Ovary (tissue), 10 donors: ENCODE measurements at regions of chr7 and their contacts with region 1.

Region 1: DNA sequence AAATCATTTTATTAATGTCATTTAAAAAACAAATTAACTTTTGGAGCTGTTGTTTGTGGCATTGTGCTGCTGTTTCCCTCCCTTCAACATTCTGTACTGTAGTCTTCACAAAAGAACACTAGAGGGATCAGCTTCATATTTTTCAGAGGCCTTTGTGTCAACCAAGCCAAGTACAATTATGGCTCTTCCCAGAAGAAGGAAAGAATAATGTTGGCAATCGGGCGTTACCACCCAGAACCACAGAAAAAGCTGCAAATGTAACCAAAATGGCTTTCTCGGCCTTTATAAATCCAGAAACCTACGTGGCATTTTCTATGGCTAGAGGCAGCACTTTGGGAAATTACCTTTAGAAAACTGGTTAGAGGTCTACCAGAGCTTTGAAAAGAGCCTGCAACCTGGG is 98.8 kb upstream of the COL1A2 start:
- DNase-seq: peak in 3 of 5 donors; percentile 20 to 44 (median 28)
- H3K4me3 ChIP-seq: no peak overlapping the region
- H3K27ac ChIP-seq: peak overlapping the region in 1 of 2 donors; percentile 84
- H3K4me1 ChIP-seq: peaks cover 16% of the 10 kb centered on the region
- H3K27me3 ChIP-seq: no peaks in the 10 kb centered on the region
- CTCF ChIP-seq: peak; percentile 44 to 83 (median 73)
- EP300 ChIP-seq: no peak
- POLR2A ChIP-seq: no peak

Region 2: DNA sequence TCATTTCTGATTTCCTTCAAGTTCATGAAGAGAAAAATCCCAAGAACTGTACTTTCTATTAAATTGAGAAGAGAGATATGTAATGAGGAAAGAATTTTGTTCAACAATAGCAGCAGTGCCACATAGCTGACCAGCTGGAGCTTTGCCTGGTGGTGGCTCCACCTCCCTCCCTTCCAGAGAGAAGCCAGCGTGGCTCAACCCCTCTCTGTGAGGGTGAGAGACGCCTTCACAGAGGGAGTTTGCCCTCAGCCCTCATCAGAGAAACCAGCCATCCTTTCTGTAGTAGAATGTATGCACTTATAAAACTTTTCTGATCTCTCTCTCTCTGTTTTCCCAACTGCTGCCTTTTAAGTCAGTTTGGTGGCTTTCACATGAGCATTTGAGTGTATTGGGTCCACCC is 78.4 kb after region 1 on chr7:
- intact Hi-C with region 1: loop called in 1 of 4 experiments (anchors 5 kb)
- DNase-seq: peak; percentile 80 to 90 (median 87)
- H3K4me3 ChIP-seq: no peak overlapping the region
- H3K27ac ChIP-seq: peak overlapping the region; percentile 40 to 87
- H3K4me1 ChIP-seq: peaks cover 20% of the 10 kb centered on the region
- H3K27me3 ChIP-seq: no peaks in the 10 kb centered on the region
- CTCF ChIP-seq: no peak
- EP300 ChIP-seq: no peak
- POLR2A ChIP-seq: no peak

Region 3: DNA sequence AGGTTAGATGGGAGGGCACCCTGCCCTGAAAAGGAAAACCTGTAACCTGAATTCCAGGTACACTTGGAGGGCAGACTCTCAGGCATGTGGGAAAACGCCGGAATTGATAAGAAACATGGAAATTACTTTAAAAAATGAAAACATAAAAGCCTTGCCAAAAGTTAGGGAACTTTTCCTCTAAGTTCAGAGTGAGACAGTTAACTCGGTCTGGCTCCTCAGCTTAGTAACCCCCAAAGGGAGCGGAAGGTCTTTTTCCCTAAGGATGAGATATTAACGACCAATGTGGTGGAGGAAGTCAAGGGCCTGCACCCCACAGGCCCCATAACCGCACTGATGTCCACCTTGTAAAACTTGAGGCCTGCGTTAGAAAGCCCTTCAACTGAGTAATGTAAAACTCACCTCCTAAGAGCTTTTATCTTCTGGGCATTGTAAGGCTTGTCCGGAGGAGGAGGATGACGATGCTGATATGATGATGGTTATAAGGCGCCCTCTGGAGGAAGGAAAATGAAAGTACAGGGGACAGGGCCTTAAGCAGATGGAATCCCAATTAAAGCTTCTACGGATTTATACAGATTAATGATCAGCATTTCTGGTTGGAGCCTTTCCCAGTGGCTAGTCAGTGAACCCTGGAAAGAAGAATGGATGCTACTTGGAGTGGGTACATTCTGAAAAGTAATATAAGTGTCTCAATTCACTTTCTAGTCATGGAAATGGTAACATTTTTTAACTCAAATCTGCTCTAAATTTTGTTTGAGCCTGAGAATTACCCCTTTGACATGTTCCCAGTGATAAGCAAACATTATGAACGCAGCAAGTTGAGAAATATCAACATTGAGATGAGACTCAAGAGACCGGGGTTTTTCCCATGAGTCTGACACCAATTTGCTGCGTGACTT is 99.5 kb after region 1 on chr7:
- intact Hi-C with region 1: loop called (anchors 1 to 5 kb)
- DNase-seq: peak; percentile 48 to 80 (median 55)
- H3K4me3 ChIP-seq: peak overlapping the region; percentile 57
- H3K27ac ChIP-seq: peak overlapping the region; percentile 61 to 93
- H3K4me1 ChIP-seq: peaks cover 5% of the 10 kb centered on the region
- H3K27me3 ChIP-seq: no peaks in the 10 kb centered on the region
- CTCF ChIP-seq: peak; percentile 75 to 96 (median 87)
- EP300 ChIP-seq: peak; percentile 13
- POLR2A ChIP-seq: no peak

Region 4: GRCh38 chr7:94436018-94436604 is 140.3 kb after region 1 on chr7:
- intact Hi-C with region 1: loop called in 2 of 4 experiments (anchors 5 to 10 kb)
- DNase-seq: peak; percentile 52 to 84 (median 67)
- H3K4me3 ChIP-seq: no peak overlapping the region
- H3K27ac ChIP-seq: no peak overlapping the region
- H3K4me1 ChIP-seq: peaks cover 1% of the 10 kb centered on the region
- H3K27me3 ChIP-seq: no peaks in the 10 kb centered on the region
- CTCF ChIP-seq: peak; percentile 72 to 79 (median 75)
- EP300 ChIP-seq: no peak
- POLR2A ChIP-seq: no peak

Region 5: DNA sequence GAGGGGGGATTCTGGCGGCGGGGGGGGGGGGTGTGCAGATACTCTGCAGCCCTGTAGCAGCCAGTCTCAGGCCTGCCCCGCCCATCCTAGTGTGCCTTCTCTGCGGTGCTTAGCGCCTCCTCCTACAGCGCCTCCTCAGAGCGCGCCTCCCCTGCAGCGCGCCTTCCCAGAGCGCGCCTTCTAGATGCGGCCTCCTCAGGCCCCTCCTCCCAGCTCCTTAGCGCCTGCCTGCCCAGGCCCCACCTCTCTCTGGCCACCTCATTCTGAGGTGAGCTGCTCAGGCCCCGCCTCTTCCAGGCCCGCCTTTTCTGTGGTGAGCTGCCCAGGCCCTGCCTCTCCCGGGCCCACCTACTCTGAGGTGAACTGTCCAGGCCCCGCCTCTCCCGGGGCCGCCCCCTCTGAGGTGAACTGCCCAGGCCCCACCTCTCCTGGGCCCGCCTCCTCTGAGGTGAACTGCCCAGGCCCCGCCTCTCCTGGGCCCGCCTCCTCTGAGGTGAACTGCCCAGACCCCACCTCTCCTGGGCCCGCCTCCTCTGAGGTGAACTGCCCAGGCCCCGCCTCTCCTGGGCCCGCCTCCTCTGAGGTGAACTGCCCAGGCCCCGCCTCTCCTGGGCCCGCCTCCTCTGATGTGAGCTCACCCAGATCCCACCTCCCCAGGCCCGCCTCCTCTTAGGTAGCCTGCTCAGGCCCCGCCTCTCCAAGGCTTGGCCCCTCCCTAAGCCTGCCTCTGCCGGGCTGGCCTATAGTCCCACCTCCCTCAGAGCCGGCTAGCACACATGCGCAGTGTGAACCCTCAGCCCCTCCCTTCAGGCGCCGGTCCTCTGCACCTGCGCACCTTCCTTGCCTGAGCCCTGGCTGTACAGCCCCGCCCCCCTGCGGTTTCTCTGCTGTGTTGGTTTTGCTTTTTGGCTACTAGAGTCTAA is 362.2 kb after region 1 on chr7:
- intact Hi-C with region 1: loop called in 1 of 4 experiments (anchors 10 kb)
- DNase-seq: peak; percentile 96 to 98 (median 97)
- H3K4me3 ChIP-seq: peak overlapping the region; percentile 66
- H3K27ac ChIP-seq: peak overlapping the region; percentile 22 to 66
- H3K4me1 ChIP-seq: no peaks in the 10 kb centered on the region
- H3K27me3 ChIP-seq: no peaks in the 10 kb centered on the region
- CTCF ChIP-seq: no peak
- EP300 ChIP-seq: no peak
- POLR2A ChIP-seq: no peak